ENCODE measurements at regions of chr2 and their contacts with region 1.

Region 1: GRCh38 chr2:217993817-217994463 is 8.9 kb downstream of the TNS1 start:
- DNase-seq: peak; percentile 46
- H3K4me3 ChIP-seq: no peak overlapping the region
- H3K27ac ChIP-seq: no peak overlapping the region
- H3K4me1 ChIP-seq: no peaks in the 10 kb centered on the region
- CTCF ChIP-seq: peak; percentile 86

Region 2: DNA sequence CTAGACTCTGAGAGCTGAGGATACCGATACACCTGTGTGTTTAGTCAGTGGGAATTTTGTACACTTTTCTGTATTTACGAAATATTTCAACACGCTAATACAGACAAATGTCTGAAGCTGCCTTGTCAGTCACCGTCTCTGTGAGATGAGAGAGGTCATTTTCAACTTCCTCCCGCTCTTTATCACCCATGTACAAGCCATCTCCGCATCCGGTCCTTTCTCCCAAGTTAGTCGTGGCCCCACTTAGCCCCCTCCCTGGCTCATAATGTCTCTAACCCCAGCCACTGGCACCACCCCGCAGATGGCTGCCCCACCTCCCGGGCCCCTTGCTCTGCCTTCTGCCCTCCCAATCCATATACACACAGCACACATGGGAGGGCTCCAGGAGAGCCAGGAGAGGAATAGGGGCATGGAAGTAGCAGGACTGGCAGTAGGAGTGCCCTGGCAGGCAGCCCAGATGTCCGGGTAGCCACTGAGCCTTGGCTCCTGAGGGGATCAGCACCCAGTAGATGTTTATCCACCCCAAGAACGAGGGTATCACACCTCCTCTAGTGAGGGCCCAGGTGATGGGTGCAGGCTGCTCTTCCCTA is 73.1 kb after region 1 on chr2:
- CTCF ChIA-PET with region 1: no interaction called
- POLR2A ChIA-PET with region 1: no interaction called
- intact Hi-C with region 1: loop called (anchors 5 kb)
- DNase-seq: no peak
- H3K4me3 ChIP-seq: no peak overlapping the region
- H3K27ac ChIP-seq: no peak overlapping the region
- H3K4me1 ChIP-seq: no peaks in the 10 kb centered on the region
- CTCF ChIP-seq: no peak